ENCODE measurements at regions of chr6 and their contacts with region 1.

Region 1: DNA sequence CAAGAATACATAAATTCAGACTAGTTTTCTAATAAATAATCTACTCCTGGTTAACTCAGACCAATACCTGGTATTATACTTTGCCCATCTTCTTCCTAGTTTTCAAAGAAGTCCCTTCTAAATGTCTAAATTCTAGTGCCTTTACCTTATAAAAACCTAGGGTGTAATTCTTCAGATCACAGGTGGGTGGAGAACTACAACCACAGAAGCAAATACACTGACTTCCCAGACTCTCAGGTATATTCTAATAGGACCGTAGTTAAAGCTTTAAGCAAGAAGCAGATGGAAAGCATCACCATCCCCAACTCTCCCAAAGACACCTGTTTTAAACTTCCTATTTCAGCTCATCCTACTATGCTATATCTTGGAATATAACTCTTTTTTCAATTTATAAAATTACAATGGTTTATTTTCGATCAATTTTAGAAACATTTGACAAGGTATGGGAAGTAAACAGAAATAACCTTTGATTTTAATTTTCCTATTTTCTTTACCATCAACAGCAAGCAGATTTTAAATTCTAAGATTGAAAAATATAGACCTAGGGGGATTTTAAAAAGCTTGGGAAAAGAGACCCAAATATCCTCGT is 15.8 kb downstream of the MAN1A1 start:
- DNase-seq: peak in 2 of 5 donors; percentile 30 to 31
- H3K4me3 ChIP-seq: no peak overlapping the region
- H3K4me3 Mint-ChIP-seq: no peak overlapping the region
- H3K27ac ChIP-seq: no peak overlapping the region
- H3K27ac Mint-ChIP-seq: no peak overlapping the region
- H3K4me1 ChIP-seq: peaks cover 7% of the 10 kb centered on the region
- H3K4me1 Mint-ChIP-seq: peaks cover 48 to 81% (median 75%) of the 10 kb centered on the region in 3 donors
- H3K27me3 ChIP-seq: no peaks in the 10 kb centered on the region
- H3K27me3 Mint-ChIP-seq: no peaks in the 10 kb centered on the region

Region 2: DNA sequence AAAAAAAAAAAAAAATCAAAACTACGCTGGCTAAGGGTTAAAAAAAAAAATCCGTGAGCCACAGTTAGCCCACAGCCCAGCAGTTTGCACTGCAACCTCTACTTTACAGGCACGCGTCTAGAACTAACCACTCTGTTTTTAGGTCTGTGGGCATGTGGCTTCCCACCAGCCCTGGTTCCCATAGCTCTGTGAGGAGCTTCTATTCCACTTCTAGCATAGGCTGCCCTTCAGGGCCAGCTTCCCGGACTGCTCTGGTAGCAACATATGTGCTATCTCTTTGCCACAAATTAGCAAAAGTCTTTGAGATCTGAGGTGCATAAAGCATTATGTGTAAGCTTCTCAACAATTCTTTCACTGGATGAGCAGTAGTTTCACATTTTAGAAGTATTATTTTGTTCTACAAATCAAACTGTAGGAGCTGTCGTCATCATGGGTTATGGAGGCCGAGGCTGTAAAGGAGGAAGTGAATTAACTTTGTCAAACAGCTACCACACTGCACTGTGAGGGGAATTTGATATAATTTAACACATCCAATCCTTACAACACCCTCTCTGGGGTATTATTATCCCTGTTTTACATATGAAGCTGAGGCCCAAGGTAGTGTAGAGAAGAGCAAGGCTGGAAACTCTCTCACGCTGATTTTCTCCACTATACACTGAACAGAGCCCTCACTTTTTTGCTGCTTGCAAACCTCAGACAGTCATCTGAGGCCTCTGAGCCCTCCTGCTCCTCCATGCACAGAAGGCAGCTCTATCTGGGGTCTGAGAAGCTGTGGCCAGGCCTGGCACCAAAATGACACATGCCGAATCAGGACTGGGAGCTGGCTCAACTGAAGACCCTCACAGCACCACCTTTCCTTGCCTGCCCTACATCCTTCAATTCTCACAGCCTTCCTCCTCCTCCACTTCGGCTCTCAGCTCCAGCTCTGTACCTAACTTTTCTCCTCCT is 19.6 kb before region 1 on chr6:
- CTCF ChIA-PET with region 1: interaction called, 13 read pairs
- POLR2A ChIA-PET with region 1: interaction called, 3 read pairs
- DNase-seq: peak; percentile 40 to 75 (median 57)
- H3K4me3 ChIP-seq: peak overlapping the region; percentile 30
- H3K4me3 Mint-ChIP-seq: peak overlapping the region; percentile 62 to 89 (median 74)
- H3K27ac ChIP-seq: peak overlapping the region; percentile 69
- H3K27ac Mint-ChIP-seq: peak overlapping the region; percentile 92 to 99 (median 98)
- H3K4me1 ChIP-seq: peaks cover 50% of the 10 kb centered on the region
- H3K4me1 Mint-ChIP-seq: peaks cover 66 to 89% (median 81%) of the 10 kb centered on the region in 3 donors
- H3K27me3 ChIP-seq: no peaks in the 10 kb centered on the region
- H3K27me3 Mint-ChIP-seq: no peaks in the 10 kb centered on the region

Region 3: GRCh38 chr6:119322715-119323350 is 11.0 kb before region 1 on chr6:
- CTCF ChIA-PET with region 1: interaction called, 11 read pairs
- POLR2A ChIA-PET with region 1: interaction called, 3 read pairs
- DNase-seq: peak; percentile 26 to 80 (median 62)
- H3K4me3 ChIP-seq: no peak overlapping the region
- H3K4me3 Mint-ChIP-seq: peak overlapping the region; percentile 0 to 64 (median 54)
- H3K27ac ChIP-seq: no peak overlapping the region
- H3K27ac Mint-ChIP-seq: peak overlapping the region; percentile 20 to 96 (median 65)
- H3K4me1 ChIP-seq: peaks cover 19% of the 10 kb centered on the region
- H3K4me1 Mint-ChIP-seq: peaks cover 33 to 56% (median 45%) of the 10 kb centered on the region in 3 donors
- H3K27me3 ChIP-seq: no peaks in the 10 kb centered on the region
- H3K27me3 Mint-ChIP-seq: no peaks in the 10 kb centered on the region

Region 4: GRCh38 chr6:119349323-119350042 is 15.7 kb after region 1 on chr6 and contains the start of gene MAN1A1:
- CTCF ChIA-PET with region 1: interaction called, 42 read pairs
- POLR2A ChIA-PET with region 1: interaction called, 5 read pairs
- DNase-seq: peak; percentile 81 to 93 (median 89)
- H3K4me3 ChIP-seq: peak within 1 kb of the TSS; percentile 78
- H3K4me3 Mint-ChIP-seq: peak within 1 kb of the TSS; percentile 95 to 99 (median 97)
- H3K27ac ChIP-seq: peak within 1 kb of the TSS; percentile 85
- H3K27ac Mint-ChIP-seq: peak within 1 kb of the TSS; percentile 80 to 97 (median 89)
- H3K4me1 ChIP-seq: peaks cover 12% of the 10 kb centered on the region
- H3K4me1 Mint-ChIP-seq: peaks cover 45 to 67% (median 61%) of the 10 kb centered on the region in 3 donors
- H3K27me3 ChIP-seq: no peaks in the 10 kb centered on the region
- H3K27me3 Mint-ChIP-seq: peaks cover 0 to 1% of the 10 kb centered on the region in 2 donors
- total RNA-seq, gene MAN1A1: 36.9 to 38.4 TPM